Naive thymus-derived CD8-positive, alpha-beta T cell (primary cell): ENCODE measurements at regions of chr11 and their contacts with region 1.

Region 1: DNA sequence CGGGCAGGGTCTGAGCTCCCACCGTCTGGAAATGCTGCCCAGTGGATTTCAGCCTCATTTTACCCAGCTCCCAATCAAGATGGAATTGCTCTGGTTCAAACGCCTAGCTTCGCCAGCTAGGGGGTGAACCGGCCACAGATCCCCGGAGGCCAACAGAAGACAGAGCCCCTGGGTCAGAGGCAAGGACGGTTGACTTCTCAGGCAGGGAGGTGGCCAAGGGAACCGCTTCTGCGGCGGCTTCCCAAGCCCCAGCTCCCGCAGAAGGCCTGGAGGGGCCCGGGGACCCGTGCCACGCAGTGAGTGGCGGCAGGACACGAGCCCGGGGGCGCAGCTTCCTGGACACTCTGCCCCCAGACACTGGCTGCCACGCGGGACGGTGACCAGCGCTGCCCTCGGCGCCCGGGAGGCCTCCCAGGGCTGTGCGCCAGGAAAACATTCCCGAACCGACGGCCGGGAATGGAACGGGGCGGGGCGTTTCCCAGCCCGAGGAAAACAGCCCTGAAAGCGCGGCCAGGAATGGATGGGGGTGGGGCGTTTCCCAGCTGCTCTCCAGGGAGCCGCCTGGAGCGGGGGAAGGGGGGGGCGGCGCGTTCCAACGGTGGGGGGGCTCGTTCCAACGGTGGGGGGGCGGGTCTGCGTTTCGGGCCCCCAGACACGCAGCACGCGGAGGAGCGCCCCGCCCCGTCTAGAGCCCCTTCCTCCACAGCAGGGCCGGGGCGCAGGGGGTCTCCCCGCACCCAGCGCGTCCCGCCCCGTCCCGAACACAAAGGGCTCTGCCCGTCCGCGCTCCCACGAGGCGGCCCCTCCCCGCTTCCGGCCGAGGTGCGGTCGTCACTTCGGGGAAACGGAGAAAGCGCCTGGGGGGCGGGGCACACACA is 13.5 kb upstream of the B4GALNT4 start:
- DNase-seq: peak; percentile 81 to 93 (median 88)
- ATAC-seq: peak; percentile 65 to 80
- H3K4me3 Mint-ChIP-seq: peak overlapping the region in 8 of 10 donors; percentile 78 to 93 (median 88)
- H3K27ac Mint-ChIP-seq: peak overlapping the region in 9 of 10 donors; percentile 90 to 99 (median 96)
- H3K4me1 Mint-ChIP-seq: peaks cover 21 to 47% (median 41%) of the 10 kb centered on the region in 4 donors
- H3K27me3 Mint-ChIP-seq: no peaks in the 10 kb centered on the region

Region 2: GRCh38 chr11:279966-280582 is 75.7 kb before region 1 on chr11:
- POLR2A ChIA-PET with region 1: interaction called, 22 read pairs
- DNase-seq: peak in 6 of 10 donors; percentile 44 to 83 (median 58)
- ATAC-seq: peak; percentile 51 to 65
- H3K4me3 Mint-ChIP-seq: peak overlapping the region; percentile 75 to 93 (median 89)
- H3K27ac Mint-ChIP-seq: peak overlapping the region in 7 of 10 donors; percentile 84 to 92 (median 88)
- H3K4me1 Mint-ChIP-seq: peaks cover 26 to 62% (median 53%) of the 10 kb centered on the region in 4 donors
- H3K27me3 Mint-ChIP-seq: peaks cover 0 to 14% (median 0%) of the 10 kb centered on the region in 5 donors

Region 3: GRCh38 chr11:304915-305843 is 50.6 kb before region 1 on chr11:
- POLR2A ChIA-PET with region 1: interaction called, 28 read pairs
- DNase-seq: peak in 8 of 10 donors; percentile 59 to 86 (median 71)
- ATAC-seq: peak; percentile 11 to 30
- H3K4me3 Mint-ChIP-seq: peak overlapping the region in 7 of 10 donors; percentile 30 to 72 (median 36)
- H3K27ac Mint-ChIP-seq: peak overlapping the region; percentile 48 to 97 (median 88)
- H3K4me1 Mint-ChIP-seq: peaks cover 32 to 74% (median 63%) of the 10 kb centered on the region in 4 donors
- H3K27me3 Mint-ChIP-seq: peaks cover 0 to 2% (median 0%) of the 10 kb centered on the region in 5 donors

Region 4: DNA sequence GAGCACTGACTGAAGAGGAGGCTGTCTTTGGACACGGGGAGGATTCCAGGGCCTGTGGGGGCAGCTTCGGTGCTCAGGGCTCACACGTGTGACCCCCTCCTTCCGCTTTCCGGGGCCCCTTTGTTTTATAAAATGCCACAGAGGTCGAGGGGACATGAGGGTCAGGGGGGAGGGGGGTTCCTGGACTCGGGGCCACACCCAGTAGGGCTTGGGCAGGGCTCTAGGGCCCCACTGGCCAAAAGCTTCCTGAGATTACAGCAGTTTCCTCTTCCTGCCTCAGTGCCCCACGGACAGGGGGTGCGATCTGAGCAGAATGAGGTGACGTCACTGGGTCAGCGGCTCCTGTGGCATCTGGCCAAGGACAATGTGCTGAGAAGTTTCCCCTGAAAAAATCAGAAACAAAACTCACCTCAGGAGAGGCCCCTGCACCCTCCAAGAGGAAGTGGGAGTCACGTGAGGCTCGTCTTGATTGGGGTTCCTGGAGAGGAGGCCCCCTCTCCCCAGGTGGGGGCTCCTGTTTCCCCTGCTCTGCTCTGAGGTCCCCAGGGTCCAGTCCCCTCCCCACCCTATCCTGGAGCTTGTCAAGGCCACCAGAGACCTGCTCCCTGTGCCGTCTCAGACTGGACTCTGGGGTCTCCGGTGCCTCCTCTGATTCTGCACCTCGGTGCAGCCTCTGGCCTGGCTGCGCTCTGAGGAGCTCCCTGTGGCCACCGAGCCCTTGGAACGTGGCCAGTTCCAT is 28.8 kb before region 1 on chr11:
- POLR2A ChIA-PET with region 1: interaction called, 38 read pairs
- DNase-seq: peak; percentile 55 to 89 (median 78)
- ATAC-seq: peak; percentile 65 to 75
- H3K4me3 Mint-ChIP-seq: peak overlapping the region; percentile 70 to 87 (median 78)
- H3K27ac Mint-ChIP-seq: peak overlapping the region; percentile 95 to 99 (median 98)
- H3K4me1 Mint-ChIP-seq: peaks cover 40 to 88% (median 80%) of the 10 kb centered on the region in 4 donors
- H3K27me3 Mint-ChIP-seq: no peaks in the 10 kb centered on the region

Region 5: DNA sequence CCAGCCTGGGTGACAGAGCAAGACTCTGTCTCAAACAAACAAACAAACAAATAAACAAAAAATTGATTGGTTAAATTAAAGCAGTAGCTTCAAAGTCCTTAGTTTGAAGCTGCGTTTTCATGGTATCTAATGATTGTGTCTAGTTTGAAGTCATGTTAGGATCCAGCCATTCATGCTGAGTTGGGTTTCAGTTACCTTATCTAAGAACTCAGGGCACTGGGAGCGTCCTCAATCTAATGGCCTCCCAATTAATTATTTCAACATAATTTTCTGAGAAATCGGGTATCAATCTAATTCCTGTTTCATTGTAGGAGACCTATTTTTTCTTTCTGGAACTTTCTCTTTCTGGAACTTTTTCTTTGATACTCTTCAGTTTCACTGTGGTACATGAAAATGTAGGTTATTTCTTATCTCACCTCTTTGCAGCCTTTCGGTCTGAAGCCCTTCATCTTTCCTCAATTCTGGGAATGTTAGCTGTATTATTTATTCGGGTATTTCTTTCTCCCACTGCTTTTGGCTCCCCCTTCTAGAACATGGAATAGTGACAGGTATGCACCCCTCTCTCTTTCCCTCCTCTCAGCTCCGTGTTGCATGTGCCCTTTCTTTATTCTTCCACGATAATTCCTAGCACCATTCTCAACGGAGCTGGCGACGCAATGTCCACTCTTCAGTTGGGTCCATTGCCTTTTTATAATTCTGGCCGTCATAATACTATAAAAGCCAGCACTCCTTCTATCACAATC is 10.8 kb before region 1 on chr11:
- POLR2A ChIA-PET with region 1: interaction called, 12 read pairs
- DNase-seq: no peak
- ATAC-seq: no peak
- H3K4me3 Mint-ChIP-seq: no peak overlapping the region
- H3K27ac Mint-ChIP-seq: peak overlapping the region in 2 of 10 donors; percentile 6 to 26
- H3K4me1 Mint-ChIP-seq: peaks cover 14 to 37% (median 33%) of the 10 kb centered on the region in 4 donors
- H3K27me3 Mint-ChIP-seq: no peaks in the 10 kb centered on the region

Region 6: GRCh38 chr11:379205-380094 is 23.6 kb after region 1 on chr11:
- POLR2A ChIA-PET with region 1: no interaction called
- DNase-seq: no peak
- ATAC-seq: no peak
- H3K4me3 Mint-ChIP-seq: no peak overlapping the region
- H3K27ac Mint-ChIP-seq: no peak overlapping the region
- H3K4me1 Mint-ChIP-seq: peaks cover 4 to 10% (median 5%) of the 10 kb centered on the region in 4 donors
- H3K27me3 Mint-ChIP-seq: peaks cover 0 to 11% (median 2%) of the 10 kb centered on the region in 5 donors

Region 7: GRCh38 chr11:416757-417621 is 61.2 kb after region 1 on chr11:
- POLR2A ChIA-PET with region 1: interaction called, 10 read pairs
- DNase-seq: peak in 6 of 10 donors; percentile 13 to 52 (median 45)
- ATAC-seq: peak; percentile 20 to 33
- H3K4me3 Mint-ChIP-seq: peak overlapping the region in 9 of 10 donors; percentile 92 to 100 (median 98)
- H3K27ac Mint-ChIP-seq: peak overlapping the region in 3 of 10 donors; percentile 31 to 95 (median 92)
- H3K4me1 Mint-ChIP-seq: peaks cover 9 to 44% (median 32%) of the 10 kb centered on the region in 4 donors
- H3K27me3 Mint-ChIP-seq: no peaks in the 10 kb centered on the region